Mammary epithelial cell (primary cell): ENCODE measurements at regions of chr12 and their contacts with region 1.

Region 1: GRCh38 chr12:123232807-123233543 is at the starts of genes MPHOSPH9 and MTRFR:
- DNase-seq: peak; percentile 100
- H3K4me3 ChIP-seq: peak within 1 kb of the TSS; percentile 77 to 93 (median 89)
- H3K27ac ChIP-seq: peak within 1 kb of the TSS; percentile 72
- H3K4me1 ChIP-seq: peaks cover 12% of the 10 kb centered on the region
- H3K27me3 ChIP-seq: no peaks in the 10 kb centered on the region
- CTCF ChIP-seq: no peak
- total RNA-seq, gene MPHOSPH9: 23.2 to 30.2 TPM
- total RNA-seq, gene MTRFR: 11.5 to 20.5 TPM

Region 2: GRCh38 chr12:122834104-122834920 is 398.7 kb before region 1 on chr12:
- CTCF ChIA-PET with region 1: no interaction called
- dilution Hi-C with region 1: loop called (anchors 25 kb)
- in situ Hi-C with region 1: no loop called
- intact Hi-C with region 1: no loop called
- DNase-seq: peak; percentile 45
- H3K4me3 ChIP-seq: peak overlapping the region; percentile 23 to 72 (median 46)
- H3K27ac ChIP-seq: peak overlapping the region; percentile 41
- H3K4me1 ChIP-seq: peaks cover 30% of the 10 kb centered on the region
- H3K27me3 ChIP-seq: no peaks in the 10 kb centered on the region
- CTCF ChIP-seq: peak in 1 of 2 donors; percentile 10

Region 3: GRCh38 chr12:122895705-122896636 is 337.0 kb before region 1 on chr12 and contains the start of gene VPS37B:
- CTCF ChIA-PET with region 1: no interaction called
- dilution Hi-C with region 1: no loop called
- in situ Hi-C with region 1: loop called in 1 of 2 experiments (anchors 25 kb)
- intact Hi-C with region 1: no loop called
- DNase-seq: peak; percentile 81
- H3K4me3 ChIP-seq: peak within 1 kb of the TSS; percentile 83 to 89 (median 86)
- H3K27ac ChIP-seq: peak within 1 kb of the TSS; percentile 99
- H3K4me1 ChIP-seq: peaks cover 57% of the 10 kb centered on the region
- H3K27me3 ChIP-seq: no peaks in the 10 kb centered on the region
- CTCF ChIP-seq: no peak
- total RNA-seq, gene VPS37B: 30.8 to 60.7 TPM

Region 4: DNA sequence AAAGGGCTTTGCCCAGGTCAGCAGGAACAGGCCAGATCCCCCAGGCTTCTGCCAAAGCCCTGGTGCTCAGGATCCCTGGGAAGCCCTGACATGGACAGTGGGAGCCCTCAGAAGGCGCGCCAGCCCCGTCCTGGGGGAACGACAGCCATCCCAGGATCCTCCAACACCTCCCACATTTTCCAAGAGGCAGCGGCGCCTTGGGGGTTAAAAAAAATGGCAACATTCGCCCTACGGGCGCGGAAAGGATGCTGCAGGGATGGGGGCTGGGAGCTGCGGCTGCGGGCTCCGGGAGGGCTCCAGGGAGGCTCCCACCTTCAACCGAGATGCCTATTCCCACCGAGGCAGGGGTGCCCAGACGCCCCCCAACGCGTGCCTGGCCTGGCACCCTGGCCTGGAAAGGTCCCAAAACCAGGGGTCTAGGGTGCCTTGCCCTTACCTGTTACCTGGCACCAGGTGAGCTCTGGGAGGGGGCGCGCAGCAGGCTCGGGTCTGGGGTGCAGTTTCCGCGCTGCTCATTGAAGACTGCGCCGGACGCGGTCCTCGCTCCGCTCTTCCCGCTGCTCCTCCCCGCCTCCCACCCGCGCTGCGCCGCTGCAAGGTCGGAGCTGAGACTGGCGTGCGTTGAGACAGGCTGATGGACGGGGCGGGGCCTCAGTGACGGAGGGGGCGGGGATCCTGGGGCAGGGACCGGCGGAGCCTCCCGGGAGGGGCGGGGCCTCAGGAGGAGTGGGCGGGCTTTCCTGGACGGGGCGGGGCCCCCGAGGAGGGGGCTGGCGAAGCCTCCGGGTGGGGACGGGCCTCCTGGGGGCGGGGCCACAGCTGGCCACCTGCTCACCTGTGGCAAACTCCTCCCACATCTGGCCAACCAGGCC is 266.9 kb before region 1 on chr12 and contains the start of gene ABCB9:
- CTCF ChIA-PET with region 1: interaction called, 4 read pairs
- dilution Hi-C with region 1: no loop called
- in situ Hi-C with region 1: loop called in 1 of 2 experiments (anchors 5 kb)
- intact Hi-C with region 1: no loop called
- DNase-seq: peak; percentile 91
- H3K4me3 ChIP-seq: peak within 1 kb of the TSS; percentile 86 to 93 (median 88)
- H3K27ac ChIP-seq: peak within 1 kb of the TSS; percentile 18
- H3K4me1 ChIP-seq: peaks cover 34% of the 10 kb centered on the region
- H3K27me3 ChIP-seq: no peaks in the 10 kb centered on the region
- CTCF ChIP-seq: no peak
- total RNA-seq, gene ABCB9: 11.2 to 15.5 TPM

Region 5: DNA sequence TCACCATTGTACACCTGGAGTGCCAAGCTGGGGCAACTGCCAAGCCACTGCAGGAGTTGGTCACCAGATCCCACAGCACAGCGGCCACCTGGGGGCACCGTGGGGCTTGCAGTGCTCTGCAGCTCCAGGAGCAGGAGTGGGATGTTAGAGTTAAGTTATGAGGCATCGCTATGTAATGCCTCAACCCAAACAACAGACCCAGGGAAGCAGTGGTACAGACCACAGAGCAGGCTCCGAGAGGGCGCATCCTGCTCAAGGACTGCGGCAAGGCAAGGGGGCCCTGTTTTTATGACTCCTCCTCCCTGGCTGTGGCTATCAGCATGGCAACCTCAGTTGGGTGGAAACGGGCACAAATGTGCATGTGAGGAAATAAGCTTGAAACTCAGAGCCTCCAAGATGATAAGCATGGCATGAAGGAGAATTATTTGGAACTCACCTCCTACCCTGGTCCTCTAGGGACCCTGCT is 189.4 kb before region 1 on chr12:
- CTCF ChIA-PET with region 1: interaction called, 26 read pairs
- dilution Hi-C with region 1: no loop called
- in situ Hi-C with region 1: loop called (anchors 5 to 10 kb)
- intact Hi-C with region 1: loop called (anchors 1 kb)
- DNase-seq: peak; percentile 83
- H3K4me3 ChIP-seq: no peak overlapping the region
- H3K27ac ChIP-seq: no peak overlapping the region
- H3K4me1 ChIP-seq: peaks cover 8% of the 10 kb centered on the region
- H3K27me3 ChIP-seq: no peaks in the 10 kb centered on the region
- CTCF ChIP-seq: peak; percentile 65 to 84

Region 6: DNA sequence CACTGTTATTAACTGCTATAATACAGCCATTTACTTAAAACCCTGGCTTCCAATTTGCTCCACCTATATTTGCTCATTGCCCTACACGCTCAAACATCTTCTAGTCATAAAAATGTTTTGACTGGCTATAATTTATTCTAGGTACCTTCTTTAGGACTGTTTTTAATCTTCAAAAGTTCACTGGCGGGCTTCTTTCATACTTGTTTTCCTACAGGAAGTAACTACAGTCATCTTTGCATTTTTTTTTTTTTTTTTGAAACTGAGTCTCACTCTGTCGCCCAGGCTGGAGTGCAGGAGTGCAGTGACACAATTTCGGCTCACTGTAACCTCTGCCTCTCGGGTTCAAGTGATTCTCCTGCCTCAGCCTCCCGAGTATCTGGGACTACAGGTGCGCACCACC is 32.6 kb before region 1 on chr12:
- CTCF ChIA-PET with region 1: no interaction called
- dilution Hi-C with region 1: loop called (anchors 5 kb)
- in situ Hi-C with region 1: no loop called
- intact Hi-C with region 1: no loop called
- DNase-seq: no peak
- H3K4me3 ChIP-seq: no peak overlapping the region
- H3K27ac ChIP-seq: no peak overlapping the region
- H3K4me1 ChIP-seq: no peaks in the 10 kb centered on the region
- H3K27me3 ChIP-seq: no peaks in the 10 kb centered on the region
- CTCF ChIP-seq: no peak

Region 7: DNA sequence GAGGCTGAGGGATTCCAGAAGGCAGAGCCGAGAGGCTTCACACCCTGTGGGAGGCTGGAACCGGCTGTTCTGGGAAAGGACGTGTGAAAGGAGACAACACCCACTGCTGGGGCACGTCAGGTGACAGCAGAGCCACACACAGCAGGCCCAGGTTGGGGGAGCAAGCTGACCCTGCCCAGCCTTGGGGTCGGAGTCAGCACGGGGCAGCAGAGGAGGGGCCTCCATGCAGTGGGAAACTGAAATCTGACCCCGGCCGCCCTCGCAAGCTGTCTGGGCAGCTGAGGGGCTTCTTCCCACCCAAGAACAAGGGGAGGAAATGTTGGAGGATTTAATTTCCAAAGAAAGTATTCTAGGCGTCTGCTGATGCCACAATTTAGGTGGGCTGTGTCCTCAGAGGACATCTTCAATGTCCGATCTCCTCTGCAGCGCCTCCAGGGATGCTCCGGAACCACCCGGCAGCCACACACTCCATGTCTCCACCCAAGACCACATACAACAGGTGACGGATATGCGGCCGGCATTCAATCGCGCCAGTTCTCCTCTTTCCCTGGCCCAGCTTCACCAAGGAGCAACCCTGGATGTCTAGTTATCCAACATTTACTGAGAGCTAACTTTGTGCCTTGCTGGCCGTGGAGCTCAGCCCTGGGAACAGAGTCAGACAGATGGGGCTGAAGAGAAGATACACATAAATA is 255.7 kb after region 1 on chr12:
- CTCF ChIA-PET with region 1: no interaction called
- dilution Hi-C with region 1: no loop called
- in situ Hi-C with region 1: no loop called
- intact Hi-C with region 1: no loop called
- DNase-seq: no peak
- H3K4me3 ChIP-seq: no peak overlapping the region
- H3K27ac ChIP-seq: no peak overlapping the region
- H3K4me1 ChIP-seq: no peaks in the 10 kb centered on the region
- H3K27me3 ChIP-seq: no peaks in the 10 kb centered on the region
- CTCF ChIP-seq: no peak